ENCODE measurements at regions of chr22 and their contacts with region 1.

Region 1: GRCh38 chr22:45577746-45578523 is 75.3 kb downstream of the FBLN1 start:
- DNase-seq: peak; percentile 81 to 91
- ATAC-seq: peak; percentile 86 to 92 (median 88)
- H3K4me3 ChIP-seq: no peak overlapping the region
- H3K27ac ChIP-seq: no peak overlapping the region
- H3K4me1 ChIP-seq: no peaks in the 10 kb centered on the region
- H3K27me3 ChIP-seq: peaks cover 0 to 6% (median 0%) of the 10 kb centered on the region in 3 donors
- CTCF ChIP-seq: peak; percentile 92

Region 2: DNA sequence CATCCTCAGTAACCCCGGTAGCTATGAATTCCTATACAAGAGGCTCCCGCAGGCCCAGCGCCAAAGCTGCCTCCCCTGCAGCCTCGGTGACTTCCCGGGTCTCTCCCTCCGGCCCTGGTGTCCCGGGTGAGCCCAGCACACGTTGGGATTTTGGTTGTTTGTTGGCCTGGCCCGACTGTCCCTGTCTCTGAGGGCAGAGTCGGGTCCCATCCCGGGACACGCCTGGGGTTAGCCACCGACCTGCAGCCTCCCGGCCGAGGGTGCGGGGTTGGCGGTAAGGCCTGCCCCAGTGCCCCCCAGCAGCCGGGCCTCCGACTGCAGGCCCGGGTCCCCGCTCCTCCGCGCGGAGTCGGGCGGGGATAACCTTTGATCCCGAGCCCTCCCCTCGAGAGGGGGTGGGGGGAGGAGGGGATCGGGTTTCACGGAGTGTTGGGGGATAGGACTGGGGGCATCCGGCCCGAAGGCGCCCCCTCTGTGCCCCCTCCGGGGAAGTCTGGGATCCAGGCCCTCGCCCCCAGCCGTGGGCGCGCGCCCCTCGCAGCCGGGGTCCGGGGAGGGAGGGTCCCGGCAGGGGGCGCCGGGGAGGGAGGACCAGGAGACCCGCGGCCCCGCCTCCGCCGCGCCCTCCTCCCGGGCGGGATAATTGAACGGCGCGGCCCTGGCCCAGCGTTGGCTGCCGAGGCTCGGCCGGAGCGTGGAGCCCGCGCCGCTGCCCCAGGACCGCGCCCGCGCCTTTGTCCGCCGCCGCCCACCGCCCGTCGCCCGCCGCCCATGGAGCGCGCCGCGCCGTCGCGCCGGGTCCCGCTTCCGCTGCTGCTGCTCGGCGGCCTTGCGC is 75.5 kb before region 1 on chr22 and contains the start of gene FBLN1:
- intact Hi-C with region 1: no loop called
- DNase-seq: peak; percentile 62 to 67
- ATAC-seq: peak; percentile 30 to 49 (median 40)
- H3K4me3 ChIP-seq: peak within 1 kb of the TSS; percentile 58
- H3K27ac ChIP-seq: no peak within 1 kb of the TSS
- H3K4me1 ChIP-seq: no peaks in the 10 kb centered on the region
- H3K27me3 ChIP-seq: peaks cover 0 to 56% (median 20%) of the 10 kb centered on the region in 3 donors
- CTCF ChIP-seq: no peak
- total RNA-seq, gene FBLN1: 19.3 to 95.7 (median 29.3) TPM

Region 3: GRCh38 chr22:45600790-45601730 is 23.1 kb after region 1 on chr22:
- intact Hi-C with region 1: no loop called
- DNase-seq: no peak
- ATAC-seq: peak in 1 of 4 donors; percentile 36
- H3K4me3 ChIP-seq: no peak overlapping the region
- H3K27ac ChIP-seq: no peak overlapping the region
- H3K4me1 ChIP-seq: no peaks in the 10 kb centered on the region
- H3K27me3 ChIP-seq: peaks cover 0 to 1% (median 0%) of the 10 kb centered on the region in 3 donors
- CTCF ChIP-seq: no peak

Region 4: GRCh38 chr22:45863981-45864751 is 286.2 kb after region 1 on chr22:
- intact Hi-C with region 1: loop called (anchors 1 to 5 kb)
- DNase-seq: peak; percentile 72 to 79
- ATAC-seq: peak; percentile 53 to 72 (median 62)
- H3K4me3 ChIP-seq: no peak overlapping the region
- H3K27ac ChIP-seq: no peak overlapping the region
- H3K4me1 ChIP-seq: peaks cover 8% of the 10 kb centered on the region
- H3K27me3 ChIP-seq: peaks cover 0 to 43% (median 15%) of the 10 kb centered on the region in 3 donors
- CTCF ChIP-seq: peak; percentile 92